HepG2 (cell line): ENCODE measurements at regions of chr11 and their contacts with region 1.

Region 1: GRCh38 chr11:62591448-62592145 is at the start of gene TUT1:
- DNase-seq: peak; percentile 98
- ATAC-seq: peak; percentile 86
- H3K4me3 ChIP-seq: peak within 1 kb of the TSS; percentile 81 to 89 (median 82)
- H3K27ac ChIP-seq: peak within 1 kb of the TSS; percentile 85
- H3K4me1 ChIP-seq: peaks cover 51% of the 10 kb centered on the region
- H3K27me3 ChIP-seq: no peaks in the 10 kb centered on the region; a peak in 1 of 5 replicates
- CTCF ChIP-seq: no peak; the same call in 1 of the 2 replicates
- EP300 ChIP-seq: peak in 1 of 2 experiments; percentile 60; a peak in 1 of 4 replicates
- POLR2A ChIP-seq: peak; percentile 96 to 97
- RAD21 ChIP-seq: no peak; the same call in 1 of the 2 replicates
- total RNA-seq, gene TUT1: 8.5 and 9.7 TPM in 2 replicates

Region 2: DNA sequence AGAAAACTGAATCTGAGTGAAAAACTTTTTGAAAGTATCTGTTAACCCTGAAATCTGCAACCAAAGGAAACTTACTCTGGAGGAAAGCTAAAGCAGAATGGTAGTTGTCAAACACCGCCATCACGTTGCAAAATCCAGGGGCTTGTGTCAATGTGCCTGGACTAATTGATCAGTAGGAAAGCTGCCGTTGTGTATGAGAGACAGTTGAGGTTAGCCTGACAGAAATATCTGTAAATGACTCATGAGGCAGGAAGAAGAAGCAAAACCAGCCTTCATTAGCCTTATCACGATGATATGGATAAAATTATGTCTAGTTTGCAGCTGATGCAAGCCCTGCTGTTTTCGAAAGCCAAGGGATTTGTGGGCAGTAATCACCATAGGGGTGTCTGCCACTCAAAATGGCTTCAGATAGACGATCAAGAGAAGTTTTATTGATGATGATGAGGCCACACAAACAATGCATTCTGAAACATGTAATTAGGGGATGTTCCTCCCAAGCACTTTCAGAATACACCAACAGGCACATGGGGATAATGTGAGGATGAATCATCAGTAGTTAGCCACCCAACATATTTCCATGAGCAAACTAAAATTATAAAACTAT is 163.9 kb before region 1 on chr11:
- CTCF ChIA-PET with region 1: no interaction called
- POLR2A ChIA-PET with region 1: interaction called, 15 read pairs
- in situ Hi-C with region 1: no loop called
- intact Hi-C with region 1: no loop called
- DNase-seq: no peak
- ATAC-seq: no peak
- H3K4me3 ChIP-seq: no peak overlapping the region
- H3K27ac ChIP-seq: peak overlapping the region; percentile 30
- H3K4me1 ChIP-seq: peaks cover 81% of the 10 kb centered on the region
- H3K27me3 ChIP-seq: no peaks in the 10 kb centered on the region
- CTCF ChIP-seq: no peak
- EP300 ChIP-seq: no peak
- POLR2A ChIP-seq: no peak
- RAD21 ChIP-seq: no peak

Region 3: GRCh38 chr11:62452261-62452660 is 139.3 kb before region 1 on chr11:
- CTCF ChIA-PET with region 1: no interaction called
- POLR2A ChIA-PET with region 1: no interaction called
- in situ Hi-C with region 1: no loop called
- intact Hi-C with region 1: no loop called
- DNase-seq: no peak
- ATAC-seq: no peak
- H3K4me3 ChIP-seq: no peak overlapping the region
- H3K27ac ChIP-seq: no peak overlapping the region
- H3K4me1 ChIP-seq: peaks cover 10% of the 10 kb centered on the region
- H3K27me3 ChIP-seq: peaks cover 2 to 7% of the 10 kb centered on the region in 2 experiments; a peak in 3 of 5 replicates
- CTCF ChIP-seq: no peak
- EP300 ChIP-seq: no peak
- POLR2A ChIP-seq: no peak
- RAD21 ChIP-seq: no peak

Region 4: DNA sequence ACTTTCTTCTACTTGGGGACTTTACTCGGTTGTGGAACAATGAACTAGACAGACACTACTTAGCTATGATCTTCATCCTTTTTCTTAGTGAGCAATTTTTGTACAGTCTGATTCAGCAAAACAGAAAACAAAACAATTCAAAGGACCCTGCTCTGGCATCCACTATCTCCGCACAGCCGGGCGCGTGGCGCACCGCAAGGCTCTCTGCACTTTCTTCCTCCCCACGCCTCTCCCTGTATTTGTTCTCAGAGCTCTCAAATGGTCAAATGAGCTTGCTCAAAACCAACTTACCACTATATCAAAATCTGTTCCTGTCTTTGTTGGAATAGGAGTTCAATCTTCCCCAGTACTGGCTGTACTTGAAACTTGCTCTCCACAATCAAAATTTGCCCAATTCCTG is 25.4 kb before region 1 on chr11:
- CTCF ChIA-PET with region 1: no interaction called
- POLR2A ChIA-PET with region 1: interaction called, 18 read pairs
- in situ Hi-C with region 1: no loop called
- intact Hi-C with region 1: no loop called
- DNase-seq: no peak
- ATAC-seq: peak; percentile 21; the same call in 2 of the 3 replicates
- H3K4me3 ChIP-seq: no peak overlapping the region
- H3K27ac ChIP-seq: no peak overlapping the region
- H3K4me1 ChIP-seq: peaks cover 83% of the 10 kb centered on the region
- H3K27me3 ChIP-seq: no peaks in the 10 kb centered on the region
- CTCF ChIP-seq: no peak
- EP300 ChIP-seq: no peak
- POLR2A ChIP-seq: no peak
- RAD21 ChIP-seq: no peak

Region 5: GRCh38 chr11:62612366-62613290 is 21.0 kb after region 1 on chr11 and contains the starts of genes EML3 and ROM1:
- CTCF ChIA-PET with region 1: interaction called, 14 read pairs
- POLR2A ChIA-PET with region 1: interaction called, 39 read pairs
- in situ Hi-C with region 1: no loop called
- intact Hi-C with region 1: no loop called
- DNase-seq: peak; percentile 70
- ATAC-seq: peak; percentile 74
- H3K4me3 ChIP-seq: peak within 1 kb of the TSS; percentile 77 to 93 (median 77)
- H3K27ac ChIP-seq: peak within 1 kb of the TSS; percentile 64
- H3K4me1 ChIP-seq: peaks cover 50% of the 10 kb centered on the region
- H3K27me3 ChIP-seq: no peaks in the 10 kb centered on the region; a peak in 1 of 5 replicates
- CTCF ChIP-seq: peak; percentile 74
- EP300 ChIP-seq: no peak
- POLR2A ChIP-seq: peak in 1 of 2 experiments; percentile 19; a peak in 1 of 4 replicates
- RAD21 ChIP-seq: peak; percentile 73
- total RNA-seq, gene EML3: 4.6 and 10.6 TPM in 2 replicates
- total RNA-seq, gene ROM1: 1.8 and 2.4 TPM in 2 replicates

Region 6: GRCh38 chr11:62652161-62653006 is 60.8 kb after region 1 on chr11:
- CTCF ChIA-PET with region 1: no interaction called
- POLR2A ChIA-PET with region 1: interaction called, 44 read pairs
- in situ Hi-C with region 1: no loop called
- intact Hi-C with region 1: loop called (anchors 5 kb)
- DNase-seq: no peak
- ATAC-seq: peak; percentile 16
- H3K4me3 ChIP-seq: peak overlapping the region; percentile 88 to 92 (median 89)
- H3K27ac ChIP-seq: peak overlapping the region; percentile 84
- H3K4me1 ChIP-seq: peaks cover 39% of the 10 kb centered on the region
- H3K27me3 ChIP-seq: no peaks in the 10 kb centered on the region
- CTCF ChIP-seq: no peak
- EP300 ChIP-seq: no peak
- POLR2A ChIP-seq: no peak
- RAD21 ChIP-seq: no peak

Region 7: DNA sequence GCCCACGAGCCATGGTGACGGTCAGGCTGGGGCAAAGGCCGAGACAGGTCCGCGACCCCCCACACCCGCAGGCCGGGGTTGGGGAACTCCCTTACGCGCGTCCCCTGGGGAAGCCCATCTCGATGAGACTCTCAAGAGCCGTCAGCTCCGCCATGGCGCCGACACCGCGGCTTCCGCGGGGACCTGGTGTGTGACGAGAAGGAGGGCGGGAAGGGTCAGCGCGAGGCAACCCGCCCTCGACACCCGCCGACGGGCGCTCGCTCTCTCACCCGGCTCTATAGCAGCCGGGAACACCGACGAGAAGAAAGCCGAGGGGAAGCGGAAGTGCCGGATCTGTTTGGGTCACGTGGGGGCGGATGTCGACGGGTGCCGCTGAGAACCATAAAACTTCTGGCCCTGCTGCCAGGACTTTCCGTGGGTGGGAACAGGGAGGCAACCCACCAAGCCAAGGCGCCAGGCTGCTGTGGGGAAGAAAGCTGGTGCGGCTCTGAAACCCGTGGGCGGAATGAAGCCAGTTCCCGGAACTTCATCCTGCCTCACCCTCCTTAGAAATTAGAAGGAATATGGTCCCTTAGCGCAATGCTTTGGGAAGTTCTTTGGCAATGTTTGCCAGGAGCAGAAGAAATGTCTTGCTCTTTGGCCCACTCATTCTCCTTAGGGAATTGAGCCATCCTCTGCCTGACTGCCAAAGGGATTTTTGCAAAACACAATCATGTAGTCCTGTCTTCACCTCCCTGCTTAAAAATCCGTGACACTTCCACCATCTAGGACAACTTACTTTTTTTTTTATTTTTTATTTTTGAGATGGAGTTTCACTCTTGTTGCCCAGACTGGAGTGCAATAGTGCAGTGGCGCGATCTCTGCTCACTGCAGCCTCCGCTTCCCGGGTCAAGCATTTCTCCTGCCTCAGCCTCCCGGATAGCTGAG is 87.4 kb after region 1 on chr11 and contains the start of gene UBXN1:
- CTCF ChIA-PET with region 1: no interaction called
- POLR2A ChIA-PET with region 1: interaction called, 38 read pairs
- in situ Hi-C with region 1: no loop called
- intact Hi-C with region 1: no loop called
- DNase-seq: peak; percentile 79
- ATAC-seq: peak; percentile 79
- H3K4me3 ChIP-seq: peak within 1 kb of the TSS; percentile 88 to 98 (median 94)
- H3K27ac ChIP-seq: peak within 1 kb of the TSS; percentile 86
- H3K4me1 ChIP-seq: peaks cover 37% of the 10 kb centered on the region
- H3K27me3 ChIP-seq: no peaks in the 10 kb centered on the region
- CTCF ChIP-seq: no peak
- EP300 ChIP-seq: no peak
- POLR2A ChIP-seq: peak; percentile 72 to 79
- RAD21 ChIP-seq: no peak; the same call in 1 of the 2 replicates
- total RNA-seq, gene UBXN1: 52.4 and 58.9 TPM in 2 replicates

Region 8: GRCh38 chr11:62855571-62856332 is 264.2 kb after region 1 on chr11:
- CTCF ChIA-PET with region 1: no interaction called
- POLR2A ChIA-PET with region 1: interaction called, 10 read pairs
- in situ Hi-C with region 1: no loop called
- intact Hi-C with region 1: no loop called
- DNase-seq: peak; percentile 97
- ATAC-seq: peak; percentile 79
- H3K4me3 ChIP-seq: peak overlapping the region; percentile 86 to 96 (median 94)
- H3K27ac ChIP-seq: peak overlapping the region; percentile 91
- H3K4me1 ChIP-seq: peaks cover 77% of the 10 kb centered on the region
- H3K27me3 ChIP-seq: no peaks in the 10 kb centered on the region; a peak in 1 of 5 replicates
- CTCF ChIP-seq: peak; percentile 23; the same call in 1 of the 2 replicates
- EP300 ChIP-seq: 0 out of 4 replicates have a peak, but pooled peaks of 1 of the 2 experiments have one; percentile 8
- POLR2A ChIP-seq: peak; percentile 99 to 100
- RAD21 ChIP-seq: peak; percentile 16; the same call in 1 of the 2 replicates